Mammary epithelial cell (primary cell): ENCODE measurements at regions of chr15 and their contacts with region 1.

Region 1: GRCh38 chr15:85984241-85984640 is 95.4 kb upstream of the AGBL1 start:
- DNase-seq: no peak
- H3K4me3 ChIP-seq: no peak overlapping the region
- H3K27ac ChIP-seq: no peak overlapping the region
- H3K4me1 ChIP-seq: no peaks in the 10 kb centered on the region
- H3K27me3 ChIP-seq: no peaks in the 10 kb centered on the region
- CTCF ChIP-seq: no peak

Region 2: DNA sequence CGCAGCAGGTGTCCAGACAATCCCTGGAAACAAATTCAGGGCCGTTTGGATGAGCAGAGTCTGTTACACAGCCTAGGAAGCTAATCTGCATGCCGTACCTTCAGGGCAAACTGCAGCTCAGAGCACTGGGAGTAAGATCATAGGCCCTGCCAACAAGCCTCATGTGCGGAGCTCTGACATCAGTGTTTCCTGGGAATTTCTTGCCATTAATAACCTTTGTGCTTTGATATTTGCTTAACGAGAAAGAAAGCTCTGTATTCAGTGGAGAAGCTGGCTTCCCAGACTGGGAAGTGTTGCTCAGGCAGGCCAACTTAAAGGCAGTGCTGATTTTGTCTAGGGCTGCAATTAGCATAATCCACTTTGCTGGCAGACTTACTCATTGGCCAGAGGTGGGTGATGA is 73.4 kb before region 1 on chr15:
- CTCF ChIA-PET with region 1: no interaction called
- dilution Hi-C with region 1: loop called (anchors 5 kb)
- in situ Hi-C with region 1: no loop called
- intact Hi-C with region 1: no loop called
- DNase-seq: peak; percentile 3
- H3K4me3 ChIP-seq: no peak overlapping the region
- H3K27ac ChIP-seq: no peak overlapping the region
- H3K4me1 ChIP-seq: no peaks in the 10 kb centered on the region
- H3K27me3 ChIP-seq: no peaks in the 10 kb centered on the region
- CTCF ChIP-seq: no peak

Region 3: GRCh38 chr15:86193716-86194380 is 209.6 kb after region 1 on chr15:
- CTCF ChIA-PET with region 1: no interaction called
- dilution Hi-C with region 1: no loop called
- in situ Hi-C with region 1: no loop called
- intact Hi-C with region 1: no loop called
- DNase-seq: no peak
- H3K4me3 ChIP-seq: no peak overlapping the region
- H3K27ac ChIP-seq: no peak overlapping the region
- H3K4me1 ChIP-seq: no peaks in the 10 kb centered on the region
- H3K27me3 ChIP-seq: no peaks in the 10 kb centered on the region
- CTCF ChIP-seq: no peak